Spleen (tissue), 13 donors: ENCODE measurements at regions of chr15 and their contacts with region 1.

Region 1: GRCh38 chr15:26891448-26892181 is 24.8 kb downstream of the GABRA5 start:
- DNase-seq: no peak
- H3K4me3 ChIP-seq: peak overlapping the region in 7 of 8 donors; percentile 11 to 58 (median 23)
- H3K27ac ChIP-seq: peak overlapping the region in 2 of 8 donors; percentile 22 to 38
- H3K4me1 ChIP-seq: peaks cover 0 to 15% (median 4%) of the 10 kb centered on the region in 6 donors
- H3K27me3 ChIP-seq: peaks cover 0 to 55% (median 4%) of the 10 kb centered on the region in 7 donors
- CTCF ChIP-seq: peak in 9 of 11 experiments; percentile 7 to 72 (median 62)
- POLR2A ChIP-seq: no peak

Region 2: DNA sequence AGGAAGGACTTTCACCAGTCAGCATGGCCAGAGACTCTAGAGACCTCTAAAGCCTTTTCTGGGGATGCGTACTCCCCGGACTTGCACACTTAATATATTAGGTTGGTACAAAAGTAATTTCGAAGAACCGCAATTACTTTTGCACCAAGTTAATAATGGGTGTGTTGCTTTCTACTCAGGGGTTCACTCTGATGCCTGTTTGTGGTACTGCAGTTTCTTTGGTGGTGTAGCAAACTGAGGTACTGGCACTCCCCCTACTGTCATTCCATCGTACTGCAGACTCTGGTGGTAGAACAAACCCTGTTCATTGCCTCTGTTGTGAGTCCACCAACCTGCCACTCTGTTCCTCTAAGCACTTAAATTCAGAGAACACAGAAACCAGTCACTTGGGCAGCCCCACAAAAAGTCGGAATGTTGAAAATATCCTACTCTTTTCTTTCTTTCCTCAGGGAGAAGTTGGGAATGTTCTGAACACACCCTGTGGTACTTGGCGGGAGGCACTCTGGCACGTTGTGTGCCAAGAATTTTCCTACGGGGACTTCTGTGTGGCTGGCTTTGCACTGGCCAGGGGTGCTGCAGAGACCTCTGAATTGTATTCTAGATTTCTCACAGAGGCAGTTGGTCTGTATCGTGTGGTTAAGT is 125.7 kb after region 1 on chr15:
- intact Hi-C with region 1: loop called (anchors 5 kb)
- DNase-seq: no peak
- H3K4me3 ChIP-seq: no peak overlapping the region
- H3K27ac ChIP-seq: no peak overlapping the region
- H3K4me1 ChIP-seq: no peaks in the 10 kb centered on the region
- H3K27me3 ChIP-seq: no peaks in the 10 kb centered on the region
- CTCF ChIP-seq: peak; percentile 25 to 91 (median 72)
- POLR2A ChIP-seq: no peak

Region 3: DNA sequence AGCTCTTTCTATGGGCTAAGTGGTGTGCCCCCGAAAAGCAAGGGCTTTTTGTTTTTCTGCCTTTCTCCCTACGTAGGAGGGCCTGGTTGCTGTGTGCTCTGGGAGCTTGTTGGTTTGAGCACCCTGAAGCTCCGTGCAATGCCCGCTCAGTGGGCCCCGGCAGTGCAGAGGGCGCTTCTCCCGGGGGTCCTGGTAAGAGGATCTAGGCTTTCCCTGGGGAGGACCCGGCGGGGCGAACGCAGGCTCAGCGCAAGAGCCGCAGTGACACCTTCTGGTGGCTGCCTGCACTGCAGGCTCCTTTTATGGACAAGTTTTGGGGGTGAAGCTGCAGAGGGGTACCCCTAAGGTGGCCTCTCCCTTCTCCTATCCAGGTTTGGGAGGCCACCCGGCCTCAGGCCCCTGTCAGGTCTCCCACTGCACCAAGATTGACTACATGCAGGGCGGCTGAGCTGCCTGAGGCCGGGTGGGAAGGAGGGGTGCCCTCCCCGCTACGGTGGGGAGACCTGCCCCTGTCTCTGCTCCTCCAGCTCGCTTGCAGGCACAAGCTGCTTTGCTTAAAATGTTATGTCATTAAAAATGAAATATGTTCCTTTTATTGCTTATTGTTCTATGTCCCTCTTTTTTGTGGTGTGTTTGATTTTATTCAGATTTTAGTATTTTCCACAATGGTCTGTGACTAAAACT is 467.3 kb after region 1 on chr15:
- intact Hi-C with region 1: loop called (anchors 10 kb)
- DNase-seq: no peak
- H3K4me3 ChIP-seq: peak overlapping the region in 3 of 8 donors; percentile 10 to 27 (median 24)
- H3K27ac ChIP-seq: no peak overlapping the region
- H3K4me1 ChIP-seq: no peaks in the 10 kb centered on the region
- H3K27me3 ChIP-seq: peaks cover 0 to 7% (median 0%) of the 10 kb centered on the region in 7 donors
- CTCF ChIP-seq: peak in 10 of 11 experiments; percentile 28 to 78 (median 58)
- POLR2A ChIP-seq: no peak